Right ventricle myocardium inferior (tissue), 1 donor: ENCODE measurements at regions of chr5 and their contacts with region 1.

Region 1: GRCh38 chr5:150640311-150641005 is at the start of gene SYNPO:
- DNase-seq: no peak
- ATAC-seq: peak; percentile 77
- total RNA-seq, gene SYNPO: 587 TPM

Region 2: GRCh38 chr5:150256410-150257064 is 383.9 kb before region 1 on chr5:
- intact Hi-C with region 1: no loop called
- DNase-seq: no peak
- ATAC-seq: no peak

Region 3: DNA sequence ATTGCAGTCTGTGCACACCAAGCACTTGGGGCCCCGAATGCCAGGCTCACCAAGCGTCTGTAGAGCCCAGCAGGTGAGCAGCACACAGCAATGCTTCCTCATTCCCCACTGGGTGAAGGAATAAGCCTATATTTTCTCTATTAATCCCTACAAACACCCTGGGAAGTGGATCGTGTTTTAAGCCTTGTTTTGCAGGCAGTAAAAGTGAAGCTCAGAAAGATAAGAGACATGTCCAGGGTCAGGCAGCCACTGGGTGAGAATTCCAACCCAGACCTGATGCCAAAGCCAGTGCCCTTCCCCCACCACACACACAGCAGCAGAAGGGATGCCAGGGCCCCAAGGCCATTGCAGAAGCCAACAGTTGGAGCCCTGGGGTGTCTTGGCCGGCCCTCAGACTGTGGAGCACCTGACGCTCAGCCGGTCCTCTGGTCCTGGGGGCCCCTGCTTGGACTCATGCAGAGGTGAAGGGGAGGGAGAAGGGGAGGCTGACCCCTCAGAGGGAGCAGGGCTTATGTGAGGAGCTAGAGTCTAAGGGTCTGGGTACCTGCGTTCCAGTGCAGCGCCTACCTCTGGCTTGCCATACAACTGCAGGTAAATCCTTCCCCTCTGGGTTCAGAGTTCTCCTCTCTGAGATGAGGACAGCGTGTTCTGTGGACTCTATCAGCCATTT is 26.3 kb before region 1 on chr5:
- intact Hi-C with region 1: loop called (anchors 5 kb)
- DNase-seq: peak; percentile 46
- ATAC-seq: peak; percentile 7

Region 4: GRCh38 chr5:150758531-150759333 is 118.3 kb after region 1 on chr5 and contains the start of gene DCTN4:
- intact Hi-C with region 1: no loop called
- DNase-seq: peak; percentile 98
- ATAC-seq: peak; percentile 94
- total RNA-seq, gene DCTN4: 46.4 TPM

Region 5: GRCh38 chr5:151141535-151141934 is 501.1 kb after region 1 on chr5:
- intact Hi-C with region 1: no loop called
- DNase-seq: no peak
- ATAC-seq: peak; percentile 80